ENCODE measurements at regions of chr11 and their contacts with region 1.

Region 1: DNA sequence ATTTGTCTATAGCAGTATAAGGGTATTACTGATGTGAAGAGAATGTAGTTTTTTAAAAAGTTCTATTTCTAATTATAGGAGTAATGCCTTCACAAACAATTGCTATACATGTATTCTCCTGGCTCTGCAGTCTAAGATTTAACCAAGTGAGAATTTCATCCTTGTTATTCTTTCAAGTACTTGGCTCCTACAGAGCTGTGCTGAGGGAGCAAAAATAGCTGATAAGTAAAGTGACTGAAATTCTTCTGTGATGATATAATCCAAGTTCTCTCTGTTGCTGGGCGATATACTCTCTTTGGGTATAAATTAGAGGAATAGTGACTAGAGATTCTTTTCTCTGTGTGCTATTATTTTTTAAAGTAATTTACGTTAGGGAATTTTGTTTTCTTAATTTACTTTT is 68.0 kb downstream of the PGR start:
- DNase-seq: no peak
- ATAC-seq: no peak
- H3K4me3 ChIP-seq: no peak overlapping the region
- H3K4me3 Mint-ChIP-seq: no peak overlapping the region
- H3K27ac ChIP-seq: no peak overlapping the region
- H3K27ac Mint-ChIP-seq: no peak overlapping the region
- H3K4me1 ChIP-seq: no peaks in the 10 kb centered on the region
- H3K4me1 Mint-ChIP-seq: no peaks in the 10 kb centered on the region
- H3K27me3 ChIP-seq: no peaks in the 10 kb centered on the region
- H3K27me3 Mint-ChIP-seq: no peaks in the 10 kb centered on the region
- CTCF ChIP-seq: no peak

Region 2: DNA sequence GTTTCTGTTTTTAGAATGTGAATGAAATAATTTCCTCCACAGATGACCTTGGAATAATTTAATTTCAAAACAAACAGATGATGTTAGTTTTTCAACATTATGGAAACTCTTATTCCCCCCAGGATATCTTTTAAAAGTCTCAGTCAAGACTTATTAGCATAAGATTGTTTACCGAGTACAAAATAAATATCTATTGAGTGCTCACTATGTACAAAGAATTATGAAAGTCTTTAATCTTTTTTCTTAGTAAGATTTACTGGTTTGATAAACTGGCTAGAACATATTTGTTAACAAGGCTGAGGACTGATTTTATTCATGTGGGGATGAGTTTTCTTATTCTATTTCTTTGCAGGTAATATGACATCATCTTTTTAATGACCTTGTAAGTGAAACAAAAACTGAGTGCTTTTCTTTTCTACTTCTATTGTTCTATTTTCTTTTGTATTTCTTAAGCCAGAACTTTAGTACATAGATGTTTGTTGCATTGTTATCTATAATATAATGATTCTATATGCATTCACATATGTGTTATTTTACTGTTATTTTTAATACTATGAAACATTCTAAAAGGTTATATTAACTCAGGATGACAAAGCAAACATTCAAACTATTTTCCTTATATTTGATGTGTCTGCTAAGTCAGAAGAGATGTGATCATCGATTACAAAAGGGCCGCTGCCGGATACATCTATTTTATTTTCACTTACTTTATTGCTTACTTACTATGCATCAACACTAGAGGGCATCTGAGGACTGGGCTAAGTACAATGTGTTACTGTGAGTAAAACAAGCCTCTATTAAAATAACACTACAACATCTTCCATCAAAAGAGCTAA is 485.5 kb before region 1 on chr11:
- CTCF ChIA-PET with region 1: no interaction called
- POLR2A ChIA-PET with region 1: no interaction called
- intact Hi-C with region 1: loop called in 1 of 2 experiments (anchors 5 kb)
- DNase-seq: peak in 2 of 14 experiments; percentile 3 to 4
- ATAC-seq: no peak
- H3K4me3 ChIP-seq: no peak overlapping the region
- H3K4me3 Mint-ChIP-seq: no peak overlapping the region
- H3K27ac ChIP-seq: no peak overlapping the region
- H3K27ac Mint-ChIP-seq: no peak overlapping the region
- H3K4me1 ChIP-seq: no peaks in the 10 kb centered on the region
- H3K4me1 Mint-ChIP-seq: no peaks in the 10 kb centered on the region
- H3K27me3 ChIP-seq: no peaks in the 10 kb centered on the region
- H3K27me3 Mint-ChIP-seq: no peaks in the 10 kb centered on the region
- CTCF ChIP-seq: no peak

Region 3: DNA sequence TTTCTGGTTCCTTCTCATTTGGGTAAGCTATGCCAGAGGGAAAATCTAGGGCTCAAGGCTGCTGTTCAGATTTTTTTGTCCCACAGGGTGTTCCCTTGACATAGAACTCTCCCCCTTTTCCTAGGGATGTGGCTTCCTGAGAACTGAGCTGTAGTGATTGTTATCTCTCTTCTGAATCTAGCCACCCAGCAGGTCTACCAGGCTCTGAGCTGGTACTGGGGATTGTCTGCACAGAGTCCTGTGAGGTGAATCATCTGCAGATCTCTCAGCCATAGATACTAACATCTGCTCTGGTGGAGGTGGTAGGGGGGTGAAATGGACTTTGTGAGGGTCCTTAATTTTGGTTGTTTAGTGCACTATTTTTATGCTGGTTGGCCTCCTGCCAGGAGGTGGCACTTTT is 235.3 kb after region 1 on chr11:
- CTCF ChIA-PET with region 1: no interaction called
- POLR2A ChIA-PET with region 1: no interaction called
- intact Hi-C with region 1: no loop called
- DNase-seq: no peak
- ATAC-seq: no peak
- H3K4me3 ChIP-seq: no peak overlapping the region
- H3K4me3 Mint-ChIP-seq: no peak overlapping the region
- H3K27ac ChIP-seq: no peak overlapping the region
- H3K27ac Mint-ChIP-seq: no peak overlapping the region
- H3K4me1 ChIP-seq: no peaks in the 10 kb centered on the region
- H3K4me1 Mint-ChIP-seq: no peaks in the 10 kb centered on the region
- H3K27me3 ChIP-seq: no peaks in the 10 kb centered on the region
- H3K27me3 Mint-ChIP-seq: no peaks in the 10 kb centered on the region
- CTCF ChIP-seq: no peak

Measured in CD4-positive, alpha-beta T cell (primary cell).